IMR-90 (cell line): ENCODE measurements at regions of chr6 and their contacts with region 1.

Region 1: GRCh38 chr6:112683926-112684325 is 336.8 kb downstream of the RFPL4B start:
- DNase-seq: peak; percentile 95
- ATAC-seq: peak; percentile 71
- H3K4me3 ChIP-seq: no peak overlapping the region
- H3K27ac ChIP-seq: no peak overlapping the region
- H3K4me1 ChIP-seq: peaks cover 4% of the 10 kb centered on the region
- H3K27me3 ChIP-seq: no peaks in the 10 kb centered on the region
- CTCF ChIP-seq: no peak
- POLR2A ChIP-seq: no peak
- RAD21 ChIP-seq: no peak

Region 2: DNA sequence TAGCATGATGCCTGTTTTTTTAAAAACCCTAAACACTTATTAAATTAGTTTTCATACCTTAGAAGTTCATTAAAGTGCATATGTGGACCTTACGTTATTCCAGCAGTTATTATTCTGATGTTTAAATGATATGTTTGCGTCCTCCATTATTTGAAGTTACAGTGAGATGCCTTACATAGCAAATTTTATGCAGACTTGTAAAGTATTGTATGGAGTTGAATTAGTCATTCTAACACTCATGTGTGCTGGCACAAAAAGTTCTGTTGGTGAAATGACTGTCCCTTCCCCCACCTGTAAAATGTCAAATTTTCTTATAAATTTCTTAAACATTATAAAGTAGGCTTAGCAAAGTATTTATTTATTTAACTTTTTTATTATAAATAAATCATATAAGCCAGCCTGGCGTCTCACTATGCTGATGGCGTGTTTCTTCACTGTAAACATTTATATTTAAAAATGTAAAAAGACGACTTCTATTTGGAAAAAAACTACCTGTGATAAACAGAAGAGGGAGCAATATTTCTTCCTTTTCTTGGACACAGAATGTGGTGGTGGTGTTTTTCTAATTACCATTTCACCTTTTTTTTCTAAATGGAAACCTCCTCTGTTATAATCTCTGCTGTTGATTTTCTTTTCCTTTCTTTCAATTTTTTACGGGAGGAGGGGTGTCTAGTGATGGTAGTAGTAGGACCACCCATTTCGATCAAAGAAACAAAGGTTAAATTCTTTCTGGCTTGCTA is 181.4 kb before region 1 on chr6:
- CTCF ChIA-PET with region 1: no interaction called
- POLR2A ChIA-PET with region 1: no interaction called
- dilution Hi-C with region 1: no loop called
- in situ Hi-C with region 1: no loop called
- intact Hi-C with region 1: loop called (anchors 5 kb)
- DNase-seq: peak; percentile 41
- ATAC-seq: peak; percentile 79
- H3K4me3 ChIP-seq: no peak overlapping the region
- H3K27ac ChIP-seq: no peak overlapping the region
- H3K4me1 ChIP-seq: peaks cover 9% of the 10 kb centered on the region
- H3K27me3 ChIP-seq: no peaks in the 10 kb centered on the region
- CTCF ChIP-seq: peak; percentile 47
- POLR2A ChIP-seq: no peak
- RAD21 ChIP-seq: peak; percentile 33; the same call in 1 of the 2 replicates

Region 3: GRCh38 chr6:112725541-112726085 is 41.7 kb after region 1 on chr6:
- CTCF ChIA-PET with region 1: no interaction called
- POLR2A ChIA-PET with region 1: no interaction called
- dilution Hi-C with region 1: no loop called
- in situ Hi-C with region 1: no loop called
- intact Hi-C with region 1: no loop called
- DNase-seq: no peak
- ATAC-seq: no peak
- H3K4me3 ChIP-seq: no peak overlapping the region
- H3K27ac ChIP-seq: no peak overlapping the region
- H3K4me1 ChIP-seq: no peaks in the 10 kb centered on the region
- H3K27me3 ChIP-seq: no peaks in the 10 kb centered on the region
- CTCF ChIP-seq: no peak
- POLR2A ChIP-seq: no peak
- RAD21 ChIP-seq: no peak